Mammary epithelial cell (primary cell): ENCODE measurements at regions of chr4 and their contacts with region 1.

Region 1: DNA sequence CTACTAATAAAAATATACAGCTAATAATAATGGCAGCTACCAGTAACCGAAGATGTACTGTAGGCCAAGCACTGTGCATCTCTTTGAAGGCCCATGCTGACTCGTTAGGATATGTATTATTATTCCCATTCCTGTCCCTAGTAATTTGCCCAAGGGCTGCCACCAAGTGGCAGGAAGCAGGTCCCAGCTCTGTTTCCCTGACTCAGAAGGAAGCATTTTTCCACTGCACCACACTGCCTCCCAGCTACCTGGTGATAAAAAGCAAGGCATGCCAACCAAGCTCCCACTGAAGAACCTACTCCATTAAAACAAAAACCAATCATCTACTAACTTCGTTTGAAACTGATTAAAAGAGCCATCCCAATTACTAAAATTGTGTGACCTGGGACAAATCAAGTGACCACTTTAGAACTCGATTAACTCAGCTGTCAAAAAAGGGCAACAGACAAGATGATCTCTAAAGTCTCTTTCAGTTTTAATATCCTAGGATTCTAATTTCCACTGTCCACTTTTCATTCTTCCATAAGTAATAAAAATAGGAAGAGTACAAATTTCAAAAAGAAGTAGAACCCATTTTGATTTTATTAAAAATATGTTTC is 24.3 kb upstream of the PGM2 start:
- DNase-seq: peak; percentile 69
- H3K4me3 ChIP-seq: no peak overlapping the region
- H3K27ac ChIP-seq: no peak overlapping the region
- H3K4me1 ChIP-seq: no peaks in the 10 kb centered on the region
- H3K27me3 ChIP-seq: no peaks in the 10 kb centered on the region
- CTCF ChIP-seq: peak; percentile 66 to 83

Region 2: DNA sequence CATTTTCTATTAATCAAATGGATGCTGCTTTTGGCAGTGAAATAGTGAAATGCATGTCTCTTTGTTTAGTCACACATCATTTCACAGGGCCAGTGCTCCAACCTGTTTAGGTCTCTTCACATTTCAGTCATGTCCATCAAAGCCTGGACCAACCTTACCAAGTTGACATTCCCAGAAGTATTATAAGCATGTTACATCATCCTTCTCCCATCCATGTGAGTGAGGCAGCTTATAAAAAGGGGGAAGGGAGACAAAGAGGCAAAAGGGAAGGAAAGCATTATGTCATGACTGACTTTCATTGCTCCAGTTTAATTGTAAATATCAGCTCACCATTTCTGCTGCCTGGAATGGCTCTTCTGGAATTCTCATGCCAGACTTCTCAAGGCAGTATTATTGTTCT is 463.2 kb before region 1 on chr4:
- CTCF ChIA-PET with region 1: no interaction called
- dilution Hi-C with region 1: no loop called
- in situ Hi-C with region 1: no loop called
- intact Hi-C with region 1: no loop called
- DNase-seq: no peak
- H3K4me3 ChIP-seq: no peak overlapping the region
- H3K27ac ChIP-seq: no peak overlapping the region
- H3K4me1 ChIP-seq: no peaks in the 10 kb centered on the region
- H3K27me3 ChIP-seq: no peaks in the 10 kb centered on the region
- CTCF ChIP-seq: no peak

Region 3: DNA sequence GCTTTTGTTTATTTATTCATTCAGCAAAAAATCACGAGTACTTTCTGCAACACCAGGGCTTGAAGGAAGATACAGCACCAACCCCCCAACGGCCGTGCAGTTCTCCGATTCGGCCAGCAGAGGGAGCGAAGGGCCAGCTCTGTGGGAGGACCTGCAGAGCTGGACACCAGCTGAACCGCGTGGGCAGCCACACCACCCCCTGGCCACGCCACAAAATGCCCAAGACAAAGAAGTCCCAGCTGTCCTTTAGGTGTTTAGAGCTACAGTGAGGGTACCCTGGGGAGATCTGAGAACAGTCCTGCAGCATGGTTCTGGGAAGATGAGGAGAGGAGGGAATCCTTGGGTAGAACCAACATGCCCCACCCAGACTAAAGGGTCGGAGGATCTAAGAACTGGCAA is 199.1 kb before region 1 on chr4:
- CTCF ChIA-PET with region 1: interaction called, 4 read pairs
- dilution Hi-C with region 1: no loop called
- in situ Hi-C with region 1: loop called in 1 of 2 experiments (anchors 5 kb)
- intact Hi-C with region 1: loop called (anchors 1 kb)
- DNase-seq: peak; percentile 45
- H3K4me3 ChIP-seq: no peak overlapping the region
- H3K27ac ChIP-seq: no peak overlapping the region
- H3K4me1 ChIP-seq: peaks cover 7% of the 10 kb centered on the region
- H3K27me3 ChIP-seq: no peaks in the 10 kb centered on the region
- CTCF ChIP-seq: peak; percentile 90 to 97

Region 4: DNA sequence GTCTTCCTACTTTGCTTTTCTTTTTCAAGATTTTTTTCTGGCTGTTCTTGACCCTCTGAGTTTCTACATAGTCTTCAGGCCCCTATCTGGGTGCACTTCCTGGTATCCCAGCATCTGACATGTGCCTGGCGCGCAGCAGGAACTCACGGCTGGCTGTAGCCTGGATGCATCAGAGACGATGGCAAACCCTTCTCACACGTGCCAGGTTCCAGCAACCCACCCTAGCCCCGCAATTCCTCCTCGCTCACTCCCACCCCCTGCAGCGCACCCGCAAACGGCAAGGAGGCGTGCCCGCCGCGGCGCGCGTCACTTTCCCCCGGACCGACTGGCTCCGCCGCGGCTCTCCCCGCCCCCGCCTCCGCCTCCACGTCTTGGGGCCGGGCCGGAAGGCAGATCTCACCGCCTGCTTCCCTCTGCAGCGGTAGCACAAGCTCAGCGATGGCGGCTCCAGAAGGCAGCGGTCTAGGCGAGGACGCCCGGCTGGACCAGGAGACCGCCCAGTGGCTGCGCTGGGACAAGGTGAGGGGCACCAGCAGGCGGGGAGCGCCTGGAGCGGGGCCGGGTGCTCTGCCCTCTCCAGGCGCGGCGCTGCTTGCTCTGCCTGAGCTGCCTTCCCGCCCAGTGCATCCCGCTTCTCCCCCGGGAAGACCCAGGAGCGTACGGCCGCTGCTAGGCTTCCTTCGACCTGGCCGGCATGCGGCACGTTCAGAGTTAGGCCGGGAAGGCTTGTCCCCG is 24.3 kb after region 1 on chr4 and contains the start of gene PGM2:
- CTCF ChIA-PET with region 1: interaction called, 3 read pairs
- dilution Hi-C with region 1: no loop called
- in situ Hi-C with region 1: no loop called
- intact Hi-C with region 1: loop called (anchors 1 kb)
- DNase-seq: peak; percentile 83
- H3K4me3 ChIP-seq: peak within 1 kb of the TSS; percentile 73 to 97 (median 95)
- H3K27ac ChIP-seq: peak within 1 kb of the TSS; percentile 64
- H3K4me1 ChIP-seq: peaks cover 31% of the 10 kb centered on the region
- H3K27me3 ChIP-seq: no peaks in the 10 kb centered on the region
- CTCF ChIP-seq: no peak
- total RNA-seq, gene PGM2: 18.5 to 33.0 TPM

Region 5: DNA sequence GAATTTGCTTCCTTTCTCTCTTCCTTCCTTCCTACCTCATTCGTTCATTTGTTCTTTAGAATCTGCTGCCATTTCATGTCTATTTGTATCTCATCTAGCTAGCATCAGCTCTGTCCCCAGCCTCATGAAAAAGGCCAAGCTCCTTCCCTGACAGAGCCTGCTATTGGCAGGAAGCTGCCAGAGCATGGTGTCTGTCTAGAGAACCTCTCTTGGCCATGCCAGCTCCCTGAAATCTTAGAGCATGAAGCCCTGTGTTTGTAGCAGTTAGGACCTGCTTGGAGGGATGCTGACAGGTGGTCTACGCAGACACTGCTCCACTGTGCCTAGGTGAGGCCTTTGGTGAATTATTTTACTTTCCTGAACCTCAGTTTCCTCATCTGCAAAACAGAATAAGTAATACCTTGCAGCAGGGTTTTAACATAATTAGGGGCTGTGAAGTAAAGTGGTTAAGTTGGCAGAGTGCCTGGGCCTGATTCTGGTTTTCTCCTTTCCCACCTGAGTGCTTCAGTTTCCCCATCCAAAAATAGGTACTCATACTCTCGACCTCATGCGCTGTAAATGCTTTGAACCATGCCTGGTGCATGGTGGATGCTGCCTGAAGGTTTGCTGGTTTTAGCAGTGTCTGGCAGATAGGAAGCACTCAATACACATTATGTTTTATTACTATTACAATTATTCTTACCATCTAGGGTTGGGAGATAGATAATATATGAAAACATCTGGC is 162.7 kb after region 1 on chr4:
- CTCF ChIA-PET with region 1: no interaction called
- dilution Hi-C with region 1: no loop called
- in situ Hi-C with region 1: no loop called
- intact Hi-C with region 1: no loop called
- DNase-seq: no peak
- H3K4me3 ChIP-seq: no peak overlapping the region
- H3K27ac ChIP-seq: no peak overlapping the region
- H3K4me1 ChIP-seq: no peaks in the 10 kb centered on the region
- H3K27me3 ChIP-seq: no peaks in the 10 kb centered on the region
- CTCF ChIP-seq: no peak

Region 6: GRCh38 chr4:37977471-37978247 is 175.5 kb after region 1 on chr4:
- CTCF ChIA-PET with region 1: no interaction called
- dilution Hi-C with region 1: no loop called
- in situ Hi-C with region 1: no loop called
- intact Hi-C with region 1: loop called (anchors 1 kb)
- DNase-seq: peak; percentile 40
- H3K4me3 ChIP-seq: peak overlapping the region; percentile 58 to 67 (median 61)
- H3K27ac ChIP-seq: peak overlapping the region; percentile 34
- H3K4me1 ChIP-seq: peaks cover 5% of the 10 kb centered on the region
- H3K27me3 ChIP-seq: no peaks in the 10 kb centered on the region
- CTCF ChIP-seq: peak; percentile 31 to 58